AG04450 (cell line): ENCODE measurements at regions of chr19 and their contacts with region 1.

Region 1: DNA sequence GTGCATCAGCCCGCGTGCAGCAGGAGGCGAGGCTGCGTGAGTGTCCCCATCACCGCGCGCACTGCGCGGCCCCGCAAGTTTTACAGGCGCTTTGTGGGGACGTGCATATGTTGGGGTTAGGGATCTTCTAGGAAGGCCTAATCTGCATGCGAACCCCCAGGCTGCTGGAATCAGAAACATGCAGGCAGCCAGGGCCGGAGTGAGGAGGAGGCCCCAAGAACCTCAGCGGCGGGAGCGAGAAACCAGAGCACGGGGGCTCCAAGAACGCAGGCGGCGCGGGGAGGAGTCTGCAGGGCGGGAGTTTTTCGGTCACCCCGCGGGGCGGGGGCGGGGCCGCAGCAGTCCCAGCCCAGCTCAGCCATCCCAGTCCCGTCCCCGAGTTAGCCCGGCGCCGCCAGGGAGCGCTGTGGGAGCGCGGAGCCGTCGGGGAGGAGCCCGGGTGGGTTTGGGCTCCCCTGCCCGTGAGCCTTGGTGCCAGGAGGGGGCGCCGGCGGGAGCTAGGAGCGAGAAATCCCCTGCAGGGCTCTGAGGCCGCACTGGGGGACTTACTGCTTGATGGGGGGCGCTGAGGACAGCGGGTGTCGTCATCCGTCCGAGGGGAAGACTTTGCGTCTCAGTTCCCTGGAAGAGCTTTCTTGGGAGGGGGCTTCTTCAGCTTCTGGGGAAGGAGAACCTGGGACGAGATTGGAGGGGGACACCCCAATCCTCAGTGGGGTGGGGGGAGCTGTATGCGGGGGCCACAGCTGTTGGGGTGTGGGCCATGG is 933 bp upstream of the NRTN start:
- DNase-seq: peak; percentile 74
- H3K4me3 ChIP-seq: peak overlapping the region; percentile 44
- H3K27ac ChIP-seq: no peak overlapping the region
- H3K27me3 ChIP-seq: peaks cover 49% of the 10 kb centered on the region
- CTCF ChIP-seq: peak; percentile 97

Region 2: GRCh38 chr19:5430237-5430636 is 373.7 kb before region 1 on chr19:
- CTCF ChIA-PET with region 1: no interaction called
- POLR2A ChIA-PET with region 1: no interaction called
- DNase-seq: no peak
- H3K4me3 ChIP-seq: no peak overlapping the region
- H3K27ac ChIP-seq: no peak overlapping the region
- H3K27me3 ChIP-seq: peaks cover 3% of the 10 kb centered on the region
- CTCF ChIP-seq: no peak

Region 3: DNA sequence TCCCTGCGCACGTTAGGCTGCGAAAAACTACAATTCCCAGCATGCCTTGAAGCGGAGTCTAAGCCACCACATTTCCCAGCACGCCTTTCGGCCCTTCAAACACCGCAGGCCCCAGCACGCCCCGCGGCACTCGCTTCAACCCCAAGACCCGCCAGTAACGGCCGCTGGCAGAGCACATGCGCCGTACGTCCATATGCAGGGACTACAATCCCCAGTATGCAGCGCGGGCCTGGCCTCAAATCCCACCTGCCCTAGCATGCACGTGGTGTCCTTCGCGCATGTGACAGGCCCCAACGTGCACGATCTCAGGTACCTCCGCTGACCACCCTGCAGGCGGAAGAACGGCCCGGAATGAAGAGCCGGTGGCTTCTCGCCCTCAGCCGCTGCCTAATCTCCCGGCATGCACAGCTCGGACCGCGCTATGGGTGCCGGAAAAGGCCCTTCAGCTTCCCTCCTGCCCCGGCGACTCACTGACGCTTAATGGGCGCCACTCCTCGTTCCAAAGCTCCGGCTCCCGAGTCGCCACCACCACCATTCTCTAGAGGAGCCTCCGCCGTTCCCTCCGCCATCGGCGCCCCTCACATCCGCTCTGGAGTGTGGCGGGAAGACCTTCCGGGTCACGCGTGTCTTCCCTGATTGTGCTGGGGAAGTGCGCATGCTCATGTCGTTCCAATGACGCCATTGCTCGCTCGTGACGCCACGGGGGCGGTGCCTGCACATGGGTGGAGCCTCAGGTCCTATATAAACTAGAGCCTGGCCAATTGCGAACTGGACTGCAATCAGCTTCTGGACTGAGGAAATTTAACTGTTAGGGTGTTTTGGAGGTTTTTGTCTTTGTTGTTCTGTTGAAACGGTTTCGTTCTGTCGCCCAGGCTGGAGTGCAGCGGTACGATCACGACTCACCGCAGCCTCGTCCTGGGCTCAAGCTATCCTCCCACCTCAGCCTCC is 13.1 kb before region 1 on chr19 and contains the start of gene DUS3L:
- CTCF ChIA-PET with region 1: interaction called, 69 read pairs
- POLR2A ChIA-PET with region 1: interaction called, 3 read pairs
- DNase-seq: peak; percentile 96
- H3K4me3 ChIP-seq: peak within 1 kb of the TSS; percentile 99
- H3K27ac ChIP-seq: peak within 1 kb of the TSS; percentile 95
- H3K27me3 ChIP-seq: no peaks in the 10 kb centered on the region
- CTCF ChIP-seq: no peak
- polyA plus RNA-seq, gene DUS3L: 7.8 and 8.0 TPM in 2 replicates

Region 4: DNA sequence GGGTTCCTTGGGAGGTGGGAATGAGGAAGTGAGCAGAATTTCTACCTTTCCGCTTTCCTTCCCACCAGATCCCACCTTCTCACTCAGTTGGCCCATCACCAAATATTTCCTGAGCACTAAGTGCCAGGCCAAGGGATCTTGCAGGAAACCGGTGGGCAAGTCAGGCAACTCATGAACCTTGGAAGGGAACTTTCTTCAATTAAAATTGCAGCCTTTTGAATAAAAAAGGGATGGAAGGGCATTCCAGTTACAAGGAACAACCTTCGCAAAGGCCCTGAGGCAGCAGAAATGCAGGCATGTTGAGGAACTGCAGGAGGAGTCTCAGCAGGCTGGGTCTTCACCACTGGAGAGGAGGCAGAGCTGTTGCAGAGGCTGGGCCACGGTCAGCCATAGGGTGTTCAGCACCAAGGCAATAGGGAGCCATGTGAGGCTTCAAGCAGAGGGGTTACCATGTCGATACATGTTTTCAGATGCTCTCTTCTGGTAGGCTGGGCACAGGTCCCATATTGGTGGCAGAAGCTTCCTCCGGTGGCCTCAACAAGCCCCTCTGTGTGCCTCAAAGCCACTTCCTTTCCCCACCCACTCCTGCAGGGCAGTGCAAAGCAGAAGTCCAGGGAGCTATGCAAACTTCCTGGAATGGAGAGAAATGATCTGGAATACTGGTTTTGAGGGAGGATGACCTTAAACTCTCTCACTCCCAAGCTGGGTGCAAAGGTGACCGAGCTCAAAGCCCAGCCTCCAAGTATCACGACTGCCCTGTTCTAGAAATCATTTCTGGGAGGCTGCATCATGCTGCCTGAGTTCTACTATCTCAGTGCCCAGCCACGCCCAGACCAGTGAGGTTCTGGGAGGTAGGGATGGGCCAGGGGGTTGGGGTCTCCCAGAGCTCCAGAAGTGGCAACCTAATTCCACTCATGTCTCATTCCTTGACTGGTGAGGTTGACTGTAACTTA is 35.4 kb after region 1 on chr19 and contains the start of gene FUT6:
- CTCF ChIA-PET with region 1: interaction called, 10 read pairs
- POLR2A ChIA-PET with region 1: no interaction called
- DNase-seq: no peak
- H3K4me3 ChIP-seq: no peak within 1 kb of the TSS
- H3K27ac ChIP-seq: no peak within 1 kb of the TSS
- H3K27me3 ChIP-seq: peaks cover 11% of the 10 kb centered on the region
- CTCF ChIP-seq: no peak
- polyA plus RNA-seq, gene FUT6: not detected in 2 replicates

Region 5: GRCh38 chr19:5891938-5892771 is 88.2 kb after region 1 on chr19:
- CTCF ChIA-PET with region 1: interaction called, 141 read pairs
- POLR2A ChIA-PET with region 1: interaction called, 10 read pairs
- DNase-seq: no peak
- H3K4me3 ChIP-seq: no peak overlapping the region
- H3K27ac ChIP-seq: no peak overlapping the region
- H3K27me3 ChIP-seq: no peaks in the 10 kb centered on the region
- CTCF ChIP-seq: peak; percentile 83

Region 6: DNA sequence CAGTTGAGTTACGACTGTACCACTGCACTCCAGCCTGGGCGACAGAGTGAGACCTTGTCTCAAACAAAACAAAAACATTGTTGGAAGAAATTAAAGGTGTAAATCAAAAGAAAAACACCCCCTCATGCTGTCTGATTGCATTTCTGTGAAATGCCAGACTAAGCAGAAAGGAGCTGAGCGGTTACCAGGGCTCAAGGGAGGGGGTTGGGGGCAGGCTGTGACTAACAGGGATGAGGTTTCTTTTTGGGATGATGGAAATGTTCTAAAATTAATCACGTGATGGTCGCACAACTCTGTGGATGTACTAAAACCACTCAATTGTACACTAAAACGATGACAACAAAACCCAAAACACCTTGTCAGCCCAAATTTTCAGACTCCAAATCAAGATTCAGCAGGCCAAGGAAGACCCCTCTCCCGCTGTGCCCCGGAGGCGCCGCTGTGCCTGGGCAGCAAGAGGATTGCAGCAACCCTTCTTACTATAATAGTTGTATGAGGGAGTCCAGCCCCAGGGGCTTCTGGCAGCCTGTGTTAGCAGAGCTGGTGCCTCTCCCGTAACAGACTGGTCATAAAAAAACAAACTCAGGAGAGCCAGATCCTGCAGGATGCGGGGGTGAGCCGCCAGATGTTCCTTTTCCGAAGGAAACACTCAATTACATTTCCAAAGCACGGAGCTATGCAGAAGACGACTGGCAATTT is 131.0 kb after region 1 on chr19:
- CTCF ChIA-PET with region 1: interaction called, 15 read pairs
- POLR2A ChIA-PET with region 1: interaction called, 3 read pairs
- DNase-seq: peak; percentile 84
- H3K4me3 ChIP-seq: peak overlapping the region; percentile 39
- H3K27ac ChIP-seq: peak overlapping the region; percentile 98
- H3K27me3 ChIP-seq: no peaks in the 10 kb centered on the region
- CTCF ChIP-seq: no peak

Region 7: DNA sequence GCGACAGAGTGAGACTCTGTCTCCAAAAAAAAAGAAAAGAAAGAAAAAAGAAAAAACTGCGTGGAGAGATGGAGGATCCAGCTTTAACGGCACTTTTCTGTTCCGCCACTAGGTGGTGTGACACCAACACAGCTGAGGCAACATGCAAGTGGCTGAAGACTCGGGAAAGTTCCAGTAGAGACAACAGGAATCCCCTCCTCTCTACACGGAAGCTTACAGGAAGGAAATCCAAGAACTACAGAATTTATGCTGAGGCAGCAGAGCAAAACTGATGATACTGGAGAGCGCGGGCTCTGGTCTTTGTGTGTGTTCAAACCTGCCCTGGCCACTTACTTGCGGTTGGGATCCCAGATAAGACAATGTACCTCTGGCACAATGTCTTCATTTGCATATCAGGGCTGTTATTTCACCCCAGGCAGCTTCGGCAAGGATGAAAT is 164.1 kb after region 1 on chr19:
- CTCF ChIA-PET with region 1: interaction called, 22 read pairs
- POLR2A ChIA-PET with region 1: no interaction called
- DNase-seq: peak; percentile 67
- H3K4me3 ChIP-seq: 0 out of 2 replicates have a peak overlapping the region, but pooled peaks have one; percentile 7
- H3K27ac ChIP-seq: peak overlapping the region; percentile 31
- H3K27me3 ChIP-seq: no peaks in the 10 kb centered on the region
- CTCF ChIP-seq: peak; percentile 92